H1 (cell line): ENCODE measurements at regions of chr1 and their contacts with region 1.

Region 1: GRCh38 chr1:11499601-11500331 is 20.8 kb downstream of the DISP3 start:
- DNase-seq: peak in 1 of 2 experiments; percentile 67
- H3K4me3 ChIP-seq: peak overlapping the region in 2 of 4 experiments; percentile 7 to 40; a peak in 5 of 8 replicates
- H3K27ac ChIP-seq: peak overlapping the region; percentile 5; the same call in 1 of the 2 replicates
- H3K4me1 ChIP-seq: peaks cover 12 to 32% (median 21%) of the 10 kb centered on the region in 4 experiments
- H3K27me3 ChIP-seq: no peaks in the 10 kb centered on the region
- CTCF ChIP-seq: no peak
- EP300 ChIP-seq: no peak
- POLR2A ChIP-seq: peak in 1 of 2 experiments; percentile 50; a peak in 2 of 3 replicates
- RAD21 ChIP-seq: no peak

Region 2: DNA sequence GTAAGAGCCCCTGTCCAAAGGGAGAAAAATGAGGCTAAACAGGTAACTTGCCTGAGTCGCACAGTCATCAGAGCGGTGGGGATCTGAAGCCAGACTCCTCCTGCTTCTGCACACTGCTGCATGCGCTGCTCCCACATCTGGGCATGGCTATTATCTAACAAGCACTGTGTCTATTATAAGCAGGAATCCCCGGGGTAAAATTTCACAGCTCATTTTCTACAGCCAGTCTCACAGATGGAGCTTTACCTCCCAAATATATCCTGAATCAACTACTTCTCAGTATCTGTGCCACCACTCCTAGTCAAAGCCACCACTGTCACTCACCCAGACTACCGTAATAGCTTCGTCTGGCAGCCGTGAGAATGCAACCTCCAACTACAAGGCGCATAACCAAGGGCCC is 247.2 kb before region 1 on chr1:
- CTCF ChIA-PET with region 1: no interaction called
- POLR2A ChIA-PET with region 1: no interaction called
- DNase-seq: no peak
- H3K4me3 ChIP-seq: no peak overlapping the region
- H3K27ac ChIP-seq: no peak overlapping the region
- H3K4me1 ChIP-seq: no peaks in the 10 kb centered on the region
- H3K27me3 ChIP-seq: no peaks in the 10 kb centered on the region
- CTCF ChIP-seq: no peak
- EP300 ChIP-seq: no peak
- POLR2A ChIP-seq: no peak
- RAD21 ChIP-seq: no peak

Region 3: DNA sequence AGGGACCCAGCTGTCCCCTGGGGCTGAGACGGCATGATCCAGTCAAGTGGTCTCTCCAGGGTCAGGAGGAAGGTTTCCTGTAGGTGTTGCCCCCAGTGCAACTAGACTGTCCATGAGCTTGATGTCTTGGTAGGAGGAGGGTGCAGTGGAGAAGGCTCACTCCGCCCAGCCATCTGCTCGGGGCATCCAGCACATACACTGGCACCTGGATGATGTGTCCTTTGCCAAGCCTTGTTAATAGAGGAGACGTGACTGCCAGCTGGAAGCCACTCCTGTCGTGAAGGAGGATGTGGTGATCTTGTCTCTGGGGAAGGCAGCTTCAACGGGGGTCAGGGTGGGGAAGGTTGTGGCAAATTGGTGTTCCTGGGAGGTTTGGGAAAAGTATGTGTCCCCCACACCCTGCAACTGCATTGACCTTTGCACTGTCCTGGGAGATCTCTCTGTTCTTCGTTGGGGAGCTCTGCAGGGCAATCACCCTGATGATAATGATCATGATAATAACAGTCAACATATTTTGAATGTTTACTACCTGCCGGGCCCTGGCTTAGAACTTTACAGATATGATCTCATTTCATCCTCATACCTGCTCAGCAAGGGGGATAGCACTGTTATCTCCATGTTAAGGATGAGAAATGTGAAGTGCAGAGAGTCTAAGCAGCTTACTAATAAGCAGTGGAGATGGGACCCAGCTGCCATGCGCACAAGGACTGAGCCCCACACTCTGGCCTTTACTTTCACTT is 14.4 kb before region 1 on chr1:
- CTCF ChIA-PET with region 1: interaction called, 42 read pairs
- POLR2A ChIA-PET with region 1: interaction called, 12 read pairs
- DNase-seq: no peak
- H3K4me3 ChIP-seq: no peak overlapping the region
- H3K27ac ChIP-seq: no peak overlapping the region
- H3K4me1 ChIP-seq: peaks cover 2 to 8% (median 4%) of the 10 kb centered on the region in 4 experiments; a peak in 6 of 7 replicates
- H3K27me3 ChIP-seq: peaks cover 0 to 7% (median 5%) of the 10 kb centered on the region in 4 experiments; a peak in 6 of 7 replicates
- CTCF ChIP-seq: no peak
- EP300 ChIP-seq: no peak
- POLR2A ChIP-seq: no peak
- RAD21 ChIP-seq: no peak

Region 4: GRCh38 chr1:11522400-11523235 is 22.9 kb after region 1 on chr1:
- CTCF ChIA-PET with region 1: no interaction called
- POLR2A ChIA-PET with region 1: no interaction called
- DNase-seq: no peak
- H3K4me3 ChIP-seq: no peak overlapping the region
- H3K27ac ChIP-seq: no peak overlapping the region
- H3K4me1 ChIP-seq: peaks cover 0 to 1% (median 0%) of the 10 kb centered on the region in 4 experiments; a peak in 1 of 7 replicates
- H3K27me3 ChIP-seq: no peaks in the 10 kb centered on the region
- CTCF ChIP-seq: no peak
- EP300 ChIP-seq: no peak
- POLR2A ChIP-seq: no peak
- RAD21 ChIP-seq: no peak